ENCODE measurements at regions of chr3 and their contacts with region 1.

Region 1: DNA sequence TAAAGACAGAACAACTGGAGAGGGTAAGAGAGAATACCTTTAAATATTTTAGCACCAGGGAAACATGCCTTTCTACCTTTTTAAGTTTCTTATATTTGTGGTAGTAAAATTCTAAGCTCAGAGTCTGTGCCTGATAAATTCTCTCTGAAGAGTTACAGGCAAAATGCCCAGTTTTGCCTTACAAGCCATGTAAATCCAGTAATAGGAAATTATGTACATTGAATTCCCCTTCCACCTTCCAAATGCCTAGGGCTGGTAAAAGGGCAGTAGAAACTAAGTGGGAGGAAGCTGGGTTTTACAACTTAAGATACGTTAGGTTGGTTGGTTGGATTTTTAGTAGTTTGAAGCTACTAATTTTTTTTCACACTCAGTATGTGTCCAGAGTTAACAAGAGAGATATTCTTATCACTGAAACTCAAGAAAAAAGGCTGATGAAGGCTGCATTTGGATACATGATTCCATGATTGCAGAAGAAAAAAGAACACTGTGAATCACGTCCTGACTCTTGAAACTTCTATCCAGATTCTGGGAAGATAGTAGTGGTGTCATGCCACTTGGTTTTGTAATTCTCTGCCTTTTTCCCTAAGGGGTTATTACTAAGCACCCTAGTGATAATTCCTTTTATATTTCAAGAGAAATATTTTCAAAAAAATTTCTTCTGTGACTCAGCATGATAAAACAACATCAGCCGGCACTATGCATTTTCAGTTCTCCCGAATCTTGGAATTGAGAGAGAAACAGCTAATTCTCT is 42.9 kb upstream of the TP63 start:
- DNase-seq: peak; percentile 92
- H3K4me3 Mint-ChIP-seq: peak overlapping the region; percentile 60
- H3K27ac Mint-ChIP-seq: peak overlapping the region; percentile 84
- H3K4me1 Mint-ChIP-seq: peaks cover 48% of the 10 kb centered on the region
- H3K27me3 Mint-ChIP-seq: no peaks in the 10 kb centered on the region
- CTCF ChIP-seq: no peak

Region 2: GRCh38 chr3:189577009-189577950 is 11.0 kb before region 1 on chr3:
- CTCF ChIA-PET with region 1: interaction called, 5 read pairs
- POLR2A ChIA-PET with region 1: interaction called, 14 read pairs
- intact Hi-C with region 1: no loop called
- DNase-seq: no peak
- H3K4me3 Mint-ChIP-seq: no peak overlapping the region
- H3K27ac Mint-ChIP-seq: peak overlapping the region; percentile 5
- H3K4me1 Mint-ChIP-seq: peaks cover 10% of the 10 kb centered on the region
- H3K27me3 Mint-ChIP-seq: no peaks in the 10 kb centered on the region
- CTCF ChIP-seq: no peak

Region 3: DNA sequence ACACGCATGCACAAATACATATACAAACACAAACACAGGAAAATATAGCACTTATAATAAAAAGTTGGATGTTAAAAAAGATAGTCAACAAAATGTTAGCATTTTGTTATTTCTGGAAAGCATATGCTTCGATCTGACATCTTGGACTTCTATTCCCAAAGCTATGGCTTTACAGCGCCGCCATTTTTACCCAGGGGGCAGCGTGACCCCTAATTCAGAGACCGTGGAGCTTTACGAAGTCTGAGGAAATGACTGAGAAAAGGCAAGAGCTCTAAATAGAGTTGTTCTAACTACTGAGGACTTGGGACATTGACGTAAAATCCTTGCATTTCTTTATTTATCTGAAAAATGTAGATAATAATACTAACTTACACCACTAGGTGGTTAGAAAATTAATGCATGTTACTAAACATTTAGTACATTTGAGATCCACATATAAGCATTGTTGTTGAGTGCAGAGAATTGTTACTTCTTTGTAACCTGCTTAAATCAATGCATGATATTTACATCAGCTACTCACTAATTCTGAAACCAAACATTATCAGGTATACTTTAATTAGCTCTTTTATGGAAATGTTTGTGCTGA is 198.3 kb after region 1 on chr3:
- CTCF ChIA-PET with region 1: interaction called, 8 read pairs
- POLR2A ChIA-PET with region 1: interaction called, 23 read pairs
- intact Hi-C with region 1: no loop called
- DNase-seq: no peak
- H3K4me3 Mint-ChIP-seq: no peak overlapping the region
- H3K27ac Mint-ChIP-seq: no peak overlapping the region
- H3K4me1 Mint-ChIP-seq: peaks cover 5% of the 10 kb centered on the region
- H3K27me3 Mint-ChIP-seq: no peaks in the 10 kb centered on the region
- CTCF ChIP-seq: peak; percentile 20

Region 4: GRCh38 chr3:189824629-189825312 is 236.5 kb after region 1 on chr3:
- CTCF ChIA-PET with region 1: interaction called, 5 read pairs
- POLR2A ChIA-PET with region 1: interaction called, 19 read pairs
- intact Hi-C with region 1: no loop called
- DNase-seq: peak; percentile 96
- H3K4me3 Mint-ChIP-seq: peak overlapping the region; percentile 42
- H3K27ac Mint-ChIP-seq: peak overlapping the region; percentile 83
- H3K4me1 Mint-ChIP-seq: peaks cover 31% of the 10 kb centered on the region
- H3K27me3 Mint-ChIP-seq: no peaks in the 10 kb centered on the region
- CTCF ChIP-seq: no peak

Region 5: DNA sequence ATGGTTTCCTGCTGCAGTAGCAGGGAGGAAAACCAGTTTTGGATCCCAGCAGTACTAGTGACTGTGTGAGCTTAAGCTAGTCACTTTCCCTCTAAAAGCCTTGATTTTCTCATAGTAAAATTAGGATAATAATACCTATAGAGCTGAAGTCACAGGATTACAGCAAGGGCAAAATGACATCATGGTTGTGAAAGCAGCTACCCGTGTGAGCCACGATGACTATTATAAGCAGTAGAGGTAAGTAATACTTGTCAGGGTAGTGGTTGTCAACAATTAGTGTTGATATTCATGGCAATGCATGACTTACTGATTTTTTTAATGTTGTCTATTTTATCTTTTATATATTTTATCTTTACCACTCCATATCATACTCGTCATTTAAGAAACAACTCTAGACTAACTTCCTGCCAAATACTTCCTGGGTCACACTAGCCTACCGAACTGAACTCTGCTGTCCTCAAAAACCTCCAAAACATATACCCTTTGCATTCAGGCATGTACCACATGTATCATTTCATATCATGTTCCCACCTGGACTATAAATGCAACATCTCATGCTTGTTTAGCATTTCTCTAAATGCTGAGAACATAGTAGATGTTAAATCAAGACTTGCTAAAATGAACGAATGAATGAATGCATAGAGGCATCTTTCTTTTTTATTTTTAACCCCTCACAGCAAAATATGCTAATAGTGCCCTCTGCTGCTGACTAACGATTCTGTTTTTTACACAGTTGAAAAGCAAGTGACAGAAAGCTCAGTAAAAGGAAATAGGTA is 359.9 kb after region 1 on chr3:
- CTCF ChIA-PET with region 1: interaction called, 5 read pairs
- POLR2A ChIA-PET with region 1: interaction called, 5 read pairs
- intact Hi-C with region 1: loop called (anchors 5 kb)
- DNase-seq: peak; percentile 73
- H3K4me3 Mint-ChIP-seq: no peak overlapping the region
- H3K27ac Mint-ChIP-seq: peak overlapping the region; percentile 74
- H3K4me1 Mint-ChIP-seq: peaks cover 26% of the 10 kb centered on the region
- H3K27me3 Mint-ChIP-seq: no peaks in the 10 kb centered on the region
- CTCF ChIP-seq: peak; percentile 76

Measured in MCF 10A (cell line).